CD8-positive, alpha-beta T cell (primary cell): ENCODE measurements at regions of chr2 and their contacts with region 1.

Region 1: DNA sequence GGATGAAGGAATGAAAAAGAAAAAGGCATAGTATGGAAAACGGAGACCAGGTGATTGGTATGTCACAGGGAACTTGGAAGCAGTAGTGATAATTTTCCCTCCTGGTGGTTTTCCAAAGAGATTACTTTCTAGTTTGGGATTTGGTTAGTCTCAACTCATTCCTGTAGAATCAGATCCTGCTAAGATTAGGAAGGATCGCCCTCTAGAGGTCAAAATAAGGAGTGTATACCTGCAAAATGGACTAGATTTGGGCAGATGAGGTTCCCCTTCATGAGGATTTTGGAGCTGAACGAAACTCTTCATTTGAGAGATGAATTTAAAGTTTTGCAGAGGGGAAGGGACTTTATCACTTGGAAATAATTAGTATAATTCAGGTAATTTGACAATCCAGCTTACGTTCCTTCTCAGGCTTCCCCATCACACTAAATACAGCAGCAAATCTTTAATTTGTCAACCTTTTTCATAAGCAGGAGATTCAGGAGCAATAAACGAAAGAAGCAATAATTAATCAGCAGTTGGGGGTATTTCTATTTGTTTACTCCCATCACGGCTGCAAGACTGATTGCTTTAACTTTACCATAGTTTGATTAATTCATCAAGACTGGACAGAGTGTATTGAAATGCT is 65.2 kb downstream of the CCDC195 start:
- DNase-seq: peak in 3 of 9 experiments; percentile 20 to 69 (median 60)
- ATAC-seq: peak; percentile 54
- H3K4me3 ChIP-seq: no peak overlapping the region
- H3K4me3 Mint-ChIP-seq: no peak overlapping the region
- H3K27ac ChIP-seq: no peak overlapping the region
- H3K27ac Mint-ChIP-seq: no peak overlapping the region
- H3K4me1 ChIP-seq: no peaks in the 10 kb centered on the region
- H3K4me1 Mint-ChIP-seq: peaks cover 2% of the 10 kb centered on the region
- H3K27me3 ChIP-seq: no peaks in the 10 kb centered on the region
- H3K27me3 Mint-ChIP-seq: no peaks in the 10 kb centered on the region
- CTCF ChIP-seq: peak; percentile 91

Region 2: DNA sequence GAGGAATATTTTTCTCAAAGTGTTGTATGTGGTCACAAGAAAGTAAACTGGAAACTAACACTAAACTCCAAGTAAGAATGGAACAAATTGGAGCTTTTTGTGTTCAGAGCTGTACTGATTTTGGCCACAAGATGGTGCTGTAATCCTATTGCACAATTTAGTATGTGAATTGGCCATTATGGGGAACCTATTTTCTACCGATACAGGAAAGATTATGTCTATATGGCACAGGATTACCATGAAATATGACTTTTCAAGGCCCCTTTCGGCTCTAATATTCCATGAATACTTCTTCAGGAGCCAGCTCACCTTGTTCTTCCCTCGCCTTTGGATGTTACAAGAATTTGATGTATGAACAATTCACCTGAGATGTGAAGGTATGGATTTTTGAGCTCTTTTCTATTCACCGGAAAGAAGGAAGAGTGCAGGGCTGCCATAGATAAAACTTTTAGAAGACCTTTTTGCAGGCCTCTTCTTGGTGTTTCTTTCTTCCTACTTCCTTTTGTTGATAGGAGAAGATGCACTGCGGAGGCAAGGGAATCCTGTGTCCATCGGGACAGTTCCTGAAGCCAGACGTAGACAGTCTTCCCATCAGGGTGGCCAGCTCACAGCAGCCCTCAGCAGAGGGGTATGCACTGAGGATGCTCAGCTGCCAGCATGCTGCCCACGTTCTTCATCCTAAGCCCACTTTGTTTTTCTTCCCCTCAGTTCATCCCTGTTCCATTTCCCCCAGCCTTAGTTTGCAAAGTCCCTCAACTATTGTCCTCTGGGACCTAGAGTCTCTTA is 680.4 kb before region 1 on chr2:
- CTCF ChIA-PET with region 1: interaction called, 10 read pairs
- POLR2A ChIA-PET with region 1: no interaction called
- intact Hi-C with region 1: loop called (anchors 5 to 10 kb)
- DNase-seq: peak; percentile 16 to 75 (median 55)
- ATAC-seq: peak; percentile 72
- H3K4me3 ChIP-seq: no peak overlapping the region
- H3K4me3 Mint-ChIP-seq: no peak overlapping the region
- H3K27ac ChIP-seq: no peak overlapping the region
- H3K27ac Mint-ChIP-seq: no peak overlapping the region
- H3K4me1 ChIP-seq: no peaks in the 10 kb centered on the region
- H3K4me1 Mint-ChIP-seq: peaks cover 4% of the 10 kb centered on the region
- H3K27me3 ChIP-seq: no peaks in the 10 kb centered on the region
- H3K27me3 Mint-ChIP-seq: no peaks in the 10 kb centered on the region
- CTCF ChIP-seq: peak; percentile 96

Region 3: GRCh38 chr2:224369028-224369632 is 281.8 kb before region 1 on chr2:
- CTCF ChIA-PET with region 1: interaction called, 91 read pairs
- POLR2A ChIA-PET with region 1: no interaction called
- intact Hi-C with region 1: no loop called
- DNase-seq: peak in 3 of 9 experiments; percentile 10 to 54 (median 45)
- ATAC-seq: no peak
- H3K4me3 ChIP-seq: no peak overlapping the region
- H3K4me3 Mint-ChIP-seq: no peak overlapping the region
- H3K27ac ChIP-seq: no peak overlapping the region
- H3K27ac Mint-ChIP-seq: no peak overlapping the region
- H3K4me1 ChIP-seq: no peaks in the 10 kb centered on the region
- H3K4me1 Mint-ChIP-seq: no peaks in the 10 kb centered on the region
- H3K27me3 ChIP-seq: no peaks in the 10 kb centered on the region
- H3K27me3 Mint-ChIP-seq: peaks cover 2% of the 10 kb centered on the region
- CTCF ChIP-seq: peak; percentile 76

Region 4: DNA sequence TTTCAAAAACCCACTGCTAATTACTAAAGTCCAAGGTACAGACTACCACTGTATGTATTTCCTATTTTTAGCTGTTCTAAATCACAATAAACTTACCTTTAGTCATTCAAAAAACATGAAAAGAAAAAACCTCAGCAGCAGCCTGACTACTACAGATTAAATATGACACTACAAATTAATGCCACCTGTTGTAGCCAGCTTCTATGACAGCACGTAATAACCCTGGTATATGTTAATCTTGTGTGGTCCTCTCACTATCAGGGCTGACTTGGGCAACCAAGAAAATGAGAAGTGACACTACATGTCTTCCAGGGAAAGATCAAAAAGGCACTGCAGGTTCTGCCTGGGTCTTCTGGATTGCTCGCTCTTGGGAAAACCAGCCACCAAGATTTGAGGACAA is 158.4 kb before region 1 on chr2:
- CTCF ChIA-PET with region 1: interaction called, 3 read pairs
- POLR2A ChIA-PET with region 1: no interaction called
- intact Hi-C with region 1: loop called in 1 of 2 experiments (anchors 10 kb)
- DNase-seq: no peak
- ATAC-seq: no peak
- H3K4me3 ChIP-seq: no peak overlapping the region
- H3K4me3 Mint-ChIP-seq: no peak overlapping the region
- H3K27ac ChIP-seq: no peak overlapping the region
- H3K27ac Mint-ChIP-seq: peak overlapping the region; percentile 15
- H3K4me1 ChIP-seq: no peaks in the 10 kb centered on the region
- H3K4me1 Mint-ChIP-seq: peaks cover 36% of the 10 kb centered on the region
- H3K27me3 ChIP-seq: no peaks in the 10 kb centered on the region
- H3K27me3 Mint-ChIP-seq: no peaks in the 10 kb centered on the region
- CTCF ChIP-seq: no peak